ENCODE measurements at regions of chr17 and their contacts with region 1.

Region 1: GRCh38 chr17:28726226-28727130 is at the start of gene TLCD1:
- DNase-seq: peak; percentile 69
- H3K4me3 Mint-ChIP-seq: peak within 1 kb of the TSS; percentile 89
- H3K27ac Mint-ChIP-seq: peak within 1 kb of the TSS; percentile 99
- H3K4me1 Mint-ChIP-seq: peaks cover 37% of the 10 kb centered on the region
- H3K27me3 Mint-ChIP-seq: no peaks in the 10 kb centered on the region
- CTCF ChIP-seq: peak; percentile 94
- total RNA-seq, gene TLCD1: 44.9 and 49.3 TPM in 2 replicates

Region 2: DNA sequence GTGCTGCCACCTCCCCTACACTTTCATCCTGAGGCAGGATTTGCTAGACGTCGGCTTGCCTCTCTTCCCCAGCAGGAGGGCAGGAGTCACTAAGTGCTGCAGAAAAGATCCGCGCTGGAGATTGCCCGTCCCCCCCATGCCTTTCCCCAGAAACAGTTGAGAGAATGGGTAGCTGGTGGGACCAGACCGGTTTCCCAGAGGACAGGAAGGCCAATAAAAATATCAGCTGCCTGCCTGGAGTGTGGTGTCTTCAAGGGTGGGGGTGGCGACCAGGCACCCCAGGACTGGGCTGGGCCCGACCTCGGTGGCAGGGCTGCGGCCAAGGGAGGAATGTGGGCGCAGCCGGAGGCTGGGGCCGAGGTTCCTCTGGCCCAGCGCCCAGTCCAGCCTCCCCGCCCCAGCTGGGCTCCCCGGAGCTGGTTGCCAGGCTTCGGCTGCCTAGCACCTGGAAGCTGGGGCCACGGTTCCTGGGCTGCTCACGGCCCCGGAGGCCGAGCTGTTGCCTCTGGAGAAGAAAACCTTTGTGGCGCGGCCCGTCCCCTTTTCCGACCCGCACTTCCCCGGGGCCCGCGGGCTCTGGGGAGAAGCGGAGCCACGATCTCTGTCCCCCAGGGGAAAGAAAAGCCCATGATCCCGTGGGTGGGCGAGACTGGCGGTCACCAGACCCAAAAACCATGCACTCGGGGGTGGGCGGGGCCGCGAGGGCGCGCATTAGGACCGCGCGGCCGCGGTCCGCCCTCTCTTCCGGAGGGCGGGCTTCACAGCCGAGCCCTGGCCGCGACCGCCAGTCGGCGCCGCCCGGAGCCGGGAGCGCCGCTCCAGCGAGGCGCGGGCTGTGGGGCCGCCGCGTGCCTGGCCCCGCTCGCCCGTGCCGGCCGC is 17.0 kb after region 1 on chr17 and contains the start of gene TRAF4:
- CTCF ChIA-PET with region 1: interaction called, 228 read pairs
- intact Hi-C with region 1: no loop called
- DNase-seq: peak; percentile 91
- H3K4me3 Mint-ChIP-seq: peak within 1 kb of the TSS; percentile 81
- H3K27ac Mint-ChIP-seq: peak within 1 kb of the TSS; percentile 91
- H3K4me1 Mint-ChIP-seq: peaks cover 39% of the 10 kb centered on the region
- H3K27me3 Mint-ChIP-seq: no peaks in the 10 kb centered on the region
- CTCF ChIP-seq: no peak
- total RNA-seq, gene TRAF4: 201 and 202 TPM in 2 replicates

Region 3: DNA sequence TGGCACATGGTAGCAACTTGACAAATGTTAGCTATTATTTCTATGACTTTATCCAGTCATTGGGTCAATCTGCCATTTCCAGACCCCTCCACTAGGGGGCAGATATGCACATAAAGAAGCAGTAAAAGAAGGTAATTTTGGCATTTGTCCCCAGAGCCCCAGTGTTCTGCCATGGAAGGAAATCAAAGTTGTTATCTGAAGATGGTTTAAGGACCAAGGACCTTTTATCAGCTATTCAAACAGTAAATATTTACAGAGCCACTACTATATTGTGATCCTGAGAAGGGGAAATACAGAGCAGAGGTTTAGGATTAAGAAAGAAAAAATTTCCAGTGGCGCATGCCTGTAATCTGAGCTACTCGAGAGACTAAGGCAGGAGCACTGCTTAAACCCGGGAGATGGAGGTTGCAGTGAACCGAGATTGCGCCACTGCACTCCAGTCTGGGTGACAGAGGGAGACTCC is 37.4 kb after region 1 on chr17:
- CTCF ChIA-PET with region 1: interaction called, 20 read pairs
- intact Hi-C with region 1: no loop called
- DNase-seq: peak; percentile 81
- H3K4me3 Mint-ChIP-seq: no peak overlapping the region
- H3K27ac Mint-ChIP-seq: no peak overlapping the region
- H3K4me1 Mint-ChIP-seq: peaks cover 9% of the 10 kb centered on the region
- H3K27me3 Mint-ChIP-seq: no peaks in the 10 kb centered on the region
- CTCF ChIP-seq: peak; percentile 72

Region 4: GRCh38 chr17:28878981-28879380 is 152.5 kb after region 1 on chr17:
- CTCF ChIA-PET with region 1: interaction called, 14 read pairs
- intact Hi-C with region 1: loop called (anchors 10 kb)
- DNase-seq: peak; percentile 65
- H3K4me3 Mint-ChIP-seq: no peak overlapping the region
- H3K27ac Mint-ChIP-seq: no peak overlapping the region
- H3K4me1 Mint-ChIP-seq: peaks cover 11% of the 10 kb centered on the region
- H3K27me3 Mint-ChIP-seq: no peaks in the 10 kb centered on the region
- CTCF ChIP-seq: peak; percentile 41

Region 5: DNA sequence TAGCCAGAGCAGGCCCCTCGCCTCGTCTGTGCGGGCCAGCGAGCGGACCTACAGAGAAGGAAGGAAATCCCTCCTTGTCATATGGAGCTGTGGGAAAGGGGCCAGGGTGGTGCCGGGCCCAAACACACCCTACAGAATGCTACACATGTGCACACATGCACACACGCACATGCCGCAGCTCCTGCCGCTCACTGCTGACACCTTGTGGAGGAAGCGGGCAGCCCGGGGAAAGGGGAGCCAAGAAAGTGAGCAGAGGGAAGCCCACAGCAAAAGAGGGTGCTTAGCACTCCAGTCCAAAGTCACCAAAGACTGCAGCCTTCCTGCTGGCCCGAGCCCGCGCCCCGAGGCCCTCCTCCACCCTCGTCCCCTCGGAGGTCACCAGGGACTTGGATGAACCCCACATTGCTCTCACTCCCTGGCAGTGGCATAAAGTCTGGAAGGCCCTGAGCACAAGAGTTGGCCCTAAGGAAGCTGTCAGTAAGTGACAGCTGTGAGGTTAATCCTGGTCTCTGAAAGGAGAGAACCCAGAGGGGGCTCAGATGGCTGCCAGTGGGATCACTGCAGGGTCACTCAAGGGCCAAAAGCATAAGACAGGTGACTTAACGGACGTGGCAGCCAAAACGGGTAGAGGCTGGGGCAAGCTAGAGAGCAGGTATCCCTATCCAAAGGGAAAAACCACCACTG is 385.5 kb after region 1 on chr17:
- CTCF ChIA-PET with region 1: interaction called, 8 read pairs
- intact Hi-C with region 1: loop called (anchors 10 kb)
- DNase-seq: peak; percentile 82
- H3K4me3 Mint-ChIP-seq: no peak overlapping the region
- H3K27ac Mint-ChIP-seq: no peak overlapping the region
- H3K4me1 Mint-ChIP-seq: peaks cover 20% of the 10 kb centered on the region
- H3K27me3 Mint-ChIP-seq: no peaks in the 10 kb centered on the region
- CTCF ChIP-seq: peak; percentile 87